ENCODE measurements at regions of chr11 and their contacts with region 1.

Region 1: DNA sequence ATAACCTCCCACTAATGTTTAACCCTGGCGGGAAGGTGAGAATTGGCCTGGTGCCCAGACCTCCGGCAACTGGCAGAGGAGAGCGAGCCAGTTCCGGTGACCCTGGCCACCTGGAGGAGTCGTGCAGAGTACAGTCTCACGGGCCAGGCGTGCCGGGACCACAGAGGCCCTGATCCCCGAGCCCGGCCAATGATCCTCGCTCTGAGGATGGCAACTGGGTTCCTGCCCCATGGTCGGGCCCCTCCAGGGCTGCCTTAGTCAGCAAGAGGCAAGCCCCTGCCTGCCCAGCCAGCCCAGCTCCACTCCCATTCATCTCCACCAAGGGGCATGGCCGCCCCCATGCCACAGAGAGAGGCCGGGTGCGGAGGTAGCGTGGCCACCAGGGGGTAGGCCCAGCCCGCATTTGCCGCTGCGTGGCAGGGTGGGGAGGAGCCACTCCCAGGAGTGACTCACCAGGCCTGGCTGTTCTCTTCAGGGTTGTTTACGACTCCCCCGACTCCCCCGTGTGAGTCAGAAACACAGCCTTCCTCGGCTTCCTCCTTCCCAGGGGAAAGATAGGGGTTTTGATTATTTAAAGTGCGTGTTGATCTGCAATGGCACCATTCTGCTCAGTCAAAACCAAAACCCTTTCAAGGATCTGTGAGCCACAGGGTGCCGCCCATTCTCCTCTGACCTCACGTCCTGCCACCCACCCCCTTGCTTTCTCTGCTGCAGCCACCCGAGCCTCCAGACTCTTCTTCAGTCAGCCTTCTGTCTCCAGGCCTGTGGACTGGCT is at the start of gene SLC25A45:
- DNase-seq: peak; percentile 94
- H3K4me3 ChIP-seq: peak within 1 kb of the TSS; percentile 22 to 26
- H3K27ac ChIP-seq: peak within 1 kb of the TSS; percentile 95 to 98
- H3K4me1 ChIP-seq: peaks cover 4% of the 10 kb centered on the region
- H3K27me3 ChIP-seq: no peaks in the 10 kb centered on the region
- CTCF ChIP-seq: peak; percentile 72 to 99 (median 92)
- POLR2A ChIP-seq: peak; percentile 49
- total RNA-seq, gene SLC25A45: 11.7 to 13.3 TPM

Region 2: GRCh38 chr11:65506770-65507505 is 124.7 kb after region 1 on chr11:
- intact Hi-C with region 1: loop called (anchors 1 kb)
- DNase-seq: peak; percentile 75
- H3K4me3 ChIP-seq: peak overlapping the region in 1 of 2 donors; percentile 88
- H3K27ac ChIP-seq: peak overlapping the region; percentile 98 to 100
- H3K4me1 ChIP-seq: no peaks in the 10 kb centered on the region
- H3K27me3 ChIP-seq: no peaks in the 10 kb centered on the region
- CTCF ChIP-seq: no peak
- POLR2A ChIP-seq: peak; percentile 6

Region 3: DNA sequence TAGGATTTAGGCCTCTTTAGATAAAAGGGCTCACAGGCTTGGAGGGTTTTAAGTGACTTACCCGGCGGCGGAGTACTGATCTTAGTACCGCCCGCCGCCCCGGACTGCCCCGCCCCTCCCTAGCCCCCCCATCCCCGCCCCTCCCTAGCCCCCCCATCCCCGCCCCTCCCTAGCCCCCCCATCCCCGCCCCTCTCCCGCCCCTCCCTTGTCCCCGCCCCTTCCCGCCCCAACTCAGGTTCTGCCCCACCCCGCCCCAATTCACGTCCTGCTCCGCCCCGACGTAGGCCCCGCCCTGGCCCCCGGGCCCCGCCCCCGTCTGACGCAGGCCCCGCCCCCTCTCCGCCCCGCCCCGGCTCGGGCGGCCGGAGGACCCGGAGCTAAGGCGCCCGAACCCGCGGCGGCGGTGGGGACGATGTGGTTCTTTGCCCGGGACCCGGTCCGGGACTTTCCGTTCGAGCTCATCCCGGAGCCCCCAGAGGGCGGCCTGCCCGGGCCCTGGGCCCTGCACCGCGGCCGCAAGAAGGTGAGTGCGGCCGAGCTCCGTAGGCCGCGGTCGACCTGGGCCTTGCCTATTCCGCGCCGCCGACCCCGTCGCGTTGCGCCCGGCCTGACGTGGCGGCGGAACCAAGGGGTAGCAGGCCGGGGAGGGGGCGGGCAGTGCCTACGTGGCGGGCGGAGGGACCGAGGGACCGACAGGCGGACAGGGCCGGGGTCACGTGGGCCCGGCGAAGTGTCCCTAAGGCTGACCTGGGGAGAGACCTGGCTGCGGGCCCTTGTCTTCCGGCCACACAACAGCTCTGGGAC is 142.7 kb after region 1 on chr11 and contains the start of gene SCYL1:
- intact Hi-C with region 1: loop called (anchors 5 kb)
- DNase-seq: peak; percentile 84
- H3K4me3 ChIP-seq: peak within 1 kb of the TSS; percentile 100
- H3K27ac ChIP-seq: peak within 1 kb of the TSS; percentile 90 to 94
- H3K4me1 ChIP-seq: peaks cover 13% of the 10 kb centered on the region
- H3K27me3 ChIP-seq: no peaks in the 10 kb centered on the region
- CTCF ChIP-seq: peak in 1 of 4 experiments; percentile 5
- POLR2A ChIP-seq: peak; percentile 50
- total RNA-seq, gene SCYL1: 125 to 177 TPM

Region 4: DNA sequence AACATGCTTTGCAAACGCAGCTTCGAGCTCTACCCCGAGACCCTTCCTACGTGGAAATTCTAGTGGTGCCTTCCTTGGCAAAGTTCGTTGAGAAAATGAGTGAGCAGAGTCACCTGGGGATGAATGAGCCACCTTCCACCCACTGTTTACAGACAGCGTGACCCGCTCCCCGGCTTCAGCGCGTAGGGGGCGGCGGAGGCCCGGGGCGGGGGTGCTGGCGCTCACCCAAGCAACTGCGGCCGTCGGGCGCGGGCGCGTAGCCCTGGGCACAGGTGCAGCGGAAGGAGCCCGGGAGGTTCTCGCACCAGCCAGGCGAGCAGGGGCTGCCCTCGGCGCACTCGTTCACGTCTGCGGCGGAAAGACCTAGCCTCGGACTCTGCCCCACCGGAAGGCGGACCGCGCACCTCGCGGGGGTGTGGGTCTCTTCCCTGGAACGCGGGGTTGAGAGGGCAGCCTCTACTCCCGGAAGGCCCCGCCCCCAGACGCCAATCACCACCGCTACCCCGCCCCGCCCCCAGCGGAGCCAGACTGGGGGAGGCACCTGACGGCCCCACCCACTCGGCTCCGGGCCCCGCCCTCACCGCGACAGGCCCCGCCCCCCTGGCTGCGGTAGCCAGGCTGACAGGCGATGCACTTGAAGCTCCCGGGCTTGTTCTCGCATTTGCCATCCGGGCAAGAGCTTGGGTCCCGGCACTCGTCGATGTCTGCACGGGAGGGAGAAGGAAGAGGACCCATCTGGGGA is 164.2 kb after region 1 on chr11:
- intact Hi-C with region 1: no loop called
- DNase-seq: peak; percentile 94
- H3K4me3 ChIP-seq: peak overlapping the region; percentile 25 to 33
- H3K27ac ChIP-seq: peak overlapping the region; percentile 69 to 76
- H3K4me1 ChIP-seq: peaks cover 6% of the 10 kb centered on the region
- H3K27me3 ChIP-seq: no peaks in the 10 kb centered on the region
- CTCF ChIP-seq: peak in 1 of 4 experiments; percentile 25
- POLR2A ChIP-seq: peak; percentile 48